GM12878 (cell line): ENCODE measurements at regions of chr10 and their contacts with region 1.

Region 1: GRCh38 chr10:96229568-96230030 is 41.8 kb downstream of the BLNK start:
- DNase-seq: peak; percentile 24
- ATAC-seq: peak; percentile 86
- H3K4me3 ChIP-seq: no peak overlapping the region
- H3K27ac ChIP-seq: peak overlapping the region; percentile 51
- H3K4me1 ChIP-seq: peaks cover 13% of the 10 kb centered on the region
- H3K27me3 ChIP-seq: no peaks in the 10 kb centered on the region
- CTCF ChIP-seq: peak; percentile 93 to 98 (median 93)
- EP300 ChIP-seq: no peak
- POLR2A ChIP-seq: no peak; the same call in 1 of the 2 replicates
- RAD21 ChIP-seq: peak; percentile 89

Region 2: GRCh38 chr10:96244354-96244753 is 14.8 kb after region 1 on chr10:
- CTCF ChIA-PET with region 1: interaction called, 32 read pairs
- POLR2A ChIA-PET with region 1: interaction called, 3 read pairs
- RAD21 ChIA-PET with region 1: interaction called, 23 read pairs
- SMC1A ChIA-PET with region 1: interaction called, 32 read pairs
- in situ Hi-C with region 1: no loop called
- intact Hi-C with region 1: no loop called
- DNase-seq: peak; percentile 89
- ATAC-seq: peak; percentile 98
- H3K4me3 ChIP-seq: 0 out of 2 replicates have a peak overlapping the region, but pooled peaks have one; percentile 18
- H3K27ac ChIP-seq: peak overlapping the region; percentile 67
- H3K4me1 ChIP-seq: peaks cover 24% of the 10 kb centered on the region
- H3K27me3 ChIP-seq: no peaks in the 10 kb centered on the region
- CTCF ChIP-seq: no peak
- EP300 ChIP-seq: peak; percentile 41 to 56; a peak in 3 of 4 replicates
- POLR2A ChIP-seq: peak; percentile 46
- RAD21 ChIP-seq: peak; percentile 3; the same call in 1 of the 2 replicates

Region 3: DNA sequence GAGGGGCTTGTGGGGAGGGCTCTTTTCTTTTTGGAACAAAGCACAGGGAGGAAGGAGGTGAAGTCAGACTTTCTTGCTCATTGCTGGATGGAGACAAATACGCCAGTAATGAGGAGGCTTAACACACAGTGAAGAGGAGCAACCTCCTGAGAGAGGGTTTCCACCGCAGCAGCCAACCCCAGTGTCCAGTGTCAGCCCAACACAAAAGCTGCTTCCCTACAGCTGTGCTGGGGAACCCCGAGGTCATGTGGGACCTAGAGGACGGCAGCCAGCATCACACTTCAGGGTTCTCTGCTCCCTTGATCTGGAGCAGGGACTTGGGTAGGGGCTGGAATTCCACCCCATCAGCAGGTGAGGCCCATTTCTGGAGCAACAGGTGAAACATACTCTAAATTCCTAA is 34.1 kb after region 1 on chr10:
- CTCF ChIA-PET with region 1: interaction called, 219 read pairs
- POLR2A ChIA-PET with region 1: interaction called, 21 read pairs
- RAD21 ChIA-PET with region 1: interaction called, 159 read pairs
- SMC1A ChIA-PET with region 1: interaction called, 123 read pairs
- in situ Hi-C with region 1: no loop called
- intact Hi-C with region 1: loop called (anchors 2 kb)
- DNase-seq: no peak
- ATAC-seq: peak; percentile 68
- H3K4me3 ChIP-seq: peak overlapping the region; percentile 40
- H3K27ac ChIP-seq: peak overlapping the region; percentile 60
- H3K4me1 ChIP-seq: peaks cover 37% of the 10 kb centered on the region
- H3K27me3 ChIP-seq: no peaks in the 10 kb centered on the region
- CTCF ChIP-seq: no peak
- EP300 ChIP-seq: no peak
- POLR2A ChIP-seq: no peak; the same call in 1 of the 2 replicates
- RAD21 ChIP-seq: no peak

Region 4: DNA sequence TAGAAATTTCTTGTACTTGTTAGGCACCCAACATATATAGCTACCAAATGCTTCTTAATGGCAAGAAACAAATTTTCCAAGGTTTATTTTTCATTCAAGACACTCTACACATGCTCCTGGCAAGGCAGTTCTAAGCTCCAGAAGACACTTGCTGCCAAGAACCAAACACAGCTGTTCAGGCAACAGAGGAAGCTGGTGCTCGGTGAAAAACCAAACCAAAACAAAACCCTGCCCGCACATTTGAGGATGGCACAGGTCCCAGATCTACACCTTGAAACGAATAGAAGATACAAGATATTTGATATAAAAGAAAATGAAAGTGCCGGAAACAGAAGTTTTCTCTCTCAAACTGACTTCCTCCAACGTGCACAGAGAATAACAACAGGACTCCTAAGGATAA is 69.8 kb after region 1 on chr10:
- CTCF ChIA-PET with region 1: interaction called, 790 read pairs
- POLR2A ChIA-PET with region 1: interaction called, 8 read pairs
- RAD21 ChIA-PET with region 1: interaction called, 428 read pairs
- SMC1A ChIA-PET with region 1: interaction called, 424 read pairs
- in situ Hi-C with region 1: loop called (anchors 5 kb)
- intact Hi-C with region 1: no loop called
- DNase-seq: no peak
- ATAC-seq: peak; percentile 45; the same call in 2 of the 3 replicates
- H3K4me3 ChIP-seq: 0 out of 2 replicates have a peak overlapping the region, but pooled peaks have one; percentile 19
- H3K27ac ChIP-seq: no peak overlapping the region
- H3K4me1 ChIP-seq: peaks cover 6% of the 10 kb centered on the region; the same call in 1 of the 2 replicates
- H3K27me3 ChIP-seq: no peaks in the 10 kb centered on the region
- CTCF ChIP-seq: no peak
- EP300 ChIP-seq: no peak
- POLR2A ChIP-seq: no peak
- RAD21 ChIP-seq: no peak

Region 5: GRCh38 chr10:96334616-96335526 is 105.3 kb after region 1 on chr10:
- CTCF ChIA-PET with region 1: interaction called, 21 read pairs
- POLR2A ChIA-PET with region 1: no interaction called
- RAD21 ChIA-PET with region 1: interaction called, 15 read pairs
- SMC1A ChIA-PET with region 1: interaction called, 14 read pairs
- in situ Hi-C with region 1: no loop called
- intact Hi-C with region 1: loop called (anchors 1 kb)
- DNase-seq: no peak
- ATAC-seq: no peak; the same call in 2 of the 3 replicates
- H3K4me3 ChIP-seq: no peak overlapping the region
- H3K27ac ChIP-seq: no peak overlapping the region
- H3K4me1 ChIP-seq: no peaks in the 10 kb centered on the region
- H3K27me3 ChIP-seq: no peaks in the 10 kb centered on the region
- CTCF ChIP-seq: peak; percentile 62 to 77 (median 62); a peak in 5 of 6 replicates
- EP300 ChIP-seq: no peak
- POLR2A ChIP-seq: no peak
- RAD21 ChIP-seq: peak; percentile 47

Region 6: DNA sequence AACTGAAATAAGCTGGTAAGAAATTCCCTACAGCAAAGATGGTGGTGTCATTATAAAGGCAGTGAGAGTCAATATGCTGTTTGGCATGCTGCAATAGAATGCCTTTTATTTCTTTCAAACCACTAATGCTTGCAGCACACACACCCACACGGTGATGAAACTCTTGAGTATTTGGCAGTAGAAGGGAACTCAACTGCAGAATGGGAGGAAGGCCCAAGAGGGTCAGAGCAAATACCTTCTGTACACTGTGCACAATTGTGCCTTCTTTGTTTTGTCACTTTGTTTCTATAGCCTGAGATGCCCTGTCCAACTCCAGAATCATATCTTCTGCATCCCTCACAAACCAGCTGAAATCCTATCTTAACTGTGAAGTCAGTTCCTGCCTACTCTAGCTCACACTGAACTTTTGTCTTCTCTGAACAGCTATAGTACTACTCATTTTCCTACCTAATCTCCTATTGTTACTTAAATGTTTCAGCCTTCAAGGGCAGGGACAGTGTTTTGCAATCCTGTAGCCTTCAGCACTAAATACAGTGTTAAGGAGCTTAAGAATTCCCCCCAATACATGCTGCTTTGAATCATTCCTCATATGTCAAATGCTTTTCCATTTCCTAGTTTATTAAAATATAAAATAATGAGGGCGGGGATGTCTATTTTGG is 1246.5 kb after region 1 on chr10:
- CTCF ChIA-PET with region 1: no interaction called
- POLR2A ChIA-PET with region 1: no interaction called
- RAD21 ChIA-PET with region 1: no interaction called
- SMC1A ChIA-PET with region 1: no interaction called
- in situ Hi-C with region 1: no loop called
- intact Hi-C with region 1: no loop called
- DNase-seq: no peak
- ATAC-seq: no peak
- H3K4me3 ChIP-seq: no peak overlapping the region
- H3K27ac ChIP-seq: no peak overlapping the region
- H3K4me1 ChIP-seq: no peaks in the 10 kb centered on the region
- H3K27me3 ChIP-seq: no peaks in the 10 kb centered on the region
- CTCF ChIP-seq: no peak
- EP300 ChIP-seq: no peak
- POLR2A ChIP-seq: no peak
- RAD21 ChIP-seq: no peak